CD4-positive, alpha-beta memory T cell (primary cell): ENCODE measurements at regions of chr17 and their contacts with region 1.

Region 1: DNA sequence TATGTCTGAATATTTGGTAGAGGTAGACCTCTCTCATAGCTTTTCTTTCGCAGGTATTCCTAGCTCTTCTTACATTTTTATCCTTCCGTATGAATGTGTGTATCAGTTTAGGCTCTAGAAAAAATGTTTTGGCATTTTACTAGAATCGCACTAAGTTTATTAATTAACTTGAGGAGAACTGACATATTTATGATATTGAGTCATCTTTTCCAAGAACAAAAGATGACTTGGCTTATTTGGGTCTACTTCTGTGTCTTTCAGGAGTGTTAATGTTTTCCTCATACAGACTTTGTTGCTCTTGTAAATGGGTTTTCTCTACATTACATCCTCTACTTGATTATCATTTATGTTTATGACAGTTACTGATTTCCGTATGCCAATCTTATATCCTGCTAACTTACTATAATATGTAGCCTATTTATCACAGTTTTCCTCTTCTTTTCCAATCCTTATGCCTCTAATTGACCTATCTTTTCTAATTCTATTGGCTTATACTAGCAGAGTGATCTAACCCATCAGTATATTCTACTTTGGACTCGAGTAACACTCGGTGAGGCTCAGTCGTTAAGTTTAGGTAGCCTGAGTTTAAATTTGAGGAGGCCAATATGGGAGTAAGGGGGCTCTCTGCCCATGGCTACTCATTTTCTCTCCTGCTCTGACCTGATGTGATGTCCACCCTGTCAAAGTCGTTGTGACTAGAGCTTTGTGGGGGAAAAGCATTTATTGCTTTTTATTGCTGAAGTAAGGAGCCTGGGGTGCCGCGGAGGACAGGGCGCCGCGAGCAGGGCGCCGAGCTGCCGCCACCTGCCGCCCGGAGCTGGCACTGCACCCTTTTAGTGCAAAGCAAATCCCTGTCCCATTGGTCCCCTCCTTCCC is 20.0 kb downstream of the ST6GALNAC1 start:
- DNase-seq: peak; percentile 67 to 73 (median 70)
- H3K4me3 ChIP-seq: no peak overlapping the region
- H3K4me3 Mint-ChIP-seq: no peak overlapping the region
- H3K27ac ChIP-seq: no peak overlapping the region
- H3K27ac Mint-ChIP-seq: peak overlapping the region in 1 of 7 donors; percentile 55
- H3K4me1 ChIP-seq: peaks cover 4% of the 10 kb centered on the region
- H3K4me1 Mint-ChIP-seq: peaks cover 0 to 6% (median under 1%) of the 10 kb centered on the region in 4 donors
- H3K27me3 ChIP-seq: no peaks in the 10 kb centered on the region
- H3K27me3 Mint-ChIP-seq: peaks cover 0 to 1% of the 10 kb centered on the region in 2 donors

Region 2: GRCh38 chr17:76264755-76265596 is 358.5 kb before region 1 on chr17 and contains the start of gene UBALD2:
- CTCF ChIA-PET with region 1: no interaction called
- POLR2A ChIA-PET with region 1: no interaction called
- intact Hi-C with region 1: no loop called
- DNase-seq: peak; percentile 99
- H3K4me3 ChIP-seq: peak within 1 kb of the TSS; percentile 94 to 100
- H3K4me3 Mint-ChIP-seq: peak within 1 kb of the TSS; percentile 89 to 95 (median 92)
- H3K27ac ChIP-seq: peak within 1 kb of the TSS; percentile 82
- H3K27ac Mint-ChIP-seq: peak within 1 kb of the TSS; percentile 93 to 98 (median 96)
- H3K4me1 ChIP-seq: peaks cover 57% of the 10 kb centered on the region
- H3K4me1 Mint-ChIP-seq: peaks cover 33 to 69% (median 52%) of the 10 kb centered on the region in 4 donors
- H3K27me3 ChIP-seq: no peaks in the 10 kb centered on the region
- H3K27me3 Mint-ChIP-seq: no peaks in the 10 kb centered on the region
- total RNA-seq, gene UBALD2: 101 to 103 TPM

Region 3: GRCh38 chr17:76408052-76408849 is 215.3 kb before region 1 on chr17:
- CTCF ChIA-PET with region 1: interaction called, 5 read pairs
- POLR2A ChIA-PET with region 1: no interaction called
- intact Hi-C with region 1: loop called (anchors 1 kb)
- DNase-seq: peak; percentile 60 to 68 (median 66)
- H3K4me3 ChIP-seq: no peak overlapping the region
- H3K4me3 Mint-ChIP-seq: no peak overlapping the region
- H3K27ac ChIP-seq: no peak overlapping the region
- H3K27ac Mint-ChIP-seq: peak overlapping the region; percentile 6 to 74 (median 59)
- H3K4me1 ChIP-seq: no peaks in the 10 kb centered on the region
- H3K4me1 Mint-ChIP-seq: peaks cover 4 to 14% (median 9%) of the 10 kb centered on the region in 4 donors
- H3K27me3 ChIP-seq: no peaks in the 10 kb centered on the region
- H3K27me3 Mint-ChIP-seq: no peaks in the 10 kb centered on the region

Region 4: DNA sequence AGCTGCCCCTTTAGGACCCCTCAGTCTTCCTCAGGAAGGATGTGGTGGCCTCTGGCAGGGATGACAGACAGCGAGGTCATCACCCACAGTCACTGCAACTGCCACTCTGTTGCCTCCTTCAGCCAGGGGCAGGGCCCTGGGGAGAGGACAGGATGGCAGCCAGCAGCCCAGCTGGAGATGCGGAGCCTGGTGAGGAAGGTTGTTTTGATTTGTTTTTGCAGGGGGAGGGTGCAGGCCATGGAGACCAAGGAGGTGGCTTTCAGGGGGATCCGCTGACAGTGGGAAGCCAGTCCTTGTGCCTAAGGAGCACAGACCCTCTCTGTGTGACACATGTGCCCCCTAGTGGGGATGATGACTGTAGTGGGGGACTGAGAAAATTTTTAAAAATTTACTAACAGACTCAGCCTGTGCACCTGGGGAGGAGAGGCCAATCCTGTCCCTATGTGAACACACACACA is 76.3 kb before region 1 on chr17:
- CTCF ChIA-PET with region 1: interaction called, 28 read pairs
- POLR2A ChIA-PET with region 1: interaction called, 3 read pairs
- intact Hi-C with region 1: no loop called
- DNase-seq: peak; percentile 37 to 62 (median 59)
- H3K4me3 ChIP-seq: no peak overlapping the region
- H3K4me3 Mint-ChIP-seq: no peak overlapping the region
- H3K27ac ChIP-seq: no peak overlapping the region
- H3K27ac Mint-ChIP-seq: peak overlapping the region in 1 of 7 donors; percentile 38
- H3K4me1 ChIP-seq: peaks cover 7% of the 10 kb centered on the region
- H3K4me1 Mint-ChIP-seq: peaks cover 0 to 2% (median 0%) of the 10 kb centered on the region in 4 donors
- H3K27me3 ChIP-seq: no peaks in the 10 kb centered on the region
- H3K27me3 Mint-ChIP-seq: peaks cover 6% of the 10 kb centered on the region in 2 donors

Region 5: GRCh38 chr17:76593384-76593826 is 30.1 kb before region 1 on chr17:
- CTCF ChIA-PET with region 1: interaction called, 11 read pairs
- POLR2A ChIA-PET with region 1: no interaction called
- intact Hi-C with region 1: no loop called
- DNase-seq: no peak
- H3K4me3 ChIP-seq: no peak overlapping the region
- H3K4me3 Mint-ChIP-seq: no peak overlapping the region
- H3K27ac ChIP-seq: no peak overlapping the region
- H3K27ac Mint-ChIP-seq: peak overlapping the region in 2 of 7 donors; percentile 6 to 49
- H3K4me1 ChIP-seq: no peaks in the 10 kb centered on the region
- H3K4me1 Mint-ChIP-seq: peaks cover 0 to 3% (median 2%) of the 10 kb centered on the region in 4 donors
- H3K27me3 ChIP-seq: no peaks in the 10 kb centered on the region
- H3K27me3 Mint-ChIP-seq: peaks cover 12 to 27% of the 10 kb centered on the region in 2 donors

Region 6: DNA sequence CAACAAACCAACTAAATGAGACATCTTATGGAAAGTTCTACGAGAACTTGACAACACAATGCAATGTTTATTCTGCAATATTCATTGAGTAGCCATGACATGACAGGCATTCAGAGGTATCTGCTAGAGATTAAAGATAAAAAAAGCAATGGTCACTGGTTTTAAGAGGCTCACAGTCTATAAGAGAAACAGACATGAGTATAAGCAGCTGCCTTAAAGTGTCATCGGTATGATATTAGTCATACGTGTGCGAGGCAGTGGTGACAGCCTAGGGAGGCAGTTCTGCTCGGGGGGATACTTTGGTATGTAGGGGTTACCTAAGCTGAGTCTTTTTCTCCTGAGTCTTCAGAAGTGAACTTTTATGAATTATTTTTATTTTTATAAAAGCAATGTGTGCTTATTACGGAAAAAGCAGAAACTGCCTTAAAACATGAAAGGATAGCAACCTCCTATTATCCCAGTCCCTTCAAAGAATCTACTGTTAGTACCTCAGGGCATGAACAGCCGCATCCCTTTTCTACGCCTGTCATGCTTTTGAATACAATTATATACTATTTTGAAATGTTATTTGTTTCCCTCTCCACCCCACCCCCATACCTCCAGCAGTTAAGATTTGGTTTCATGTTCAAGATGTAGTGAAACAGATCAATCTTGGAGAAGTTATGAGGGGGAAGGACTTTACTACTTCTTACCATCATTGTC is 12.3 kb after region 1 on chr17:
- CTCF ChIA-PET with region 1: interaction called, 40 read pairs
- POLR2A ChIA-PET with region 1: no interaction called
- intact Hi-C with region 1: no loop called
- DNase-seq: no peak
- H3K4me3 ChIP-seq: no peak overlapping the region
- H3K4me3 Mint-ChIP-seq: no peak overlapping the region
- H3K27ac ChIP-seq: no peak overlapping the region
- H3K27ac Mint-ChIP-seq: no peak overlapping the region
- H3K4me1 ChIP-seq: peaks cover 9% of the 10 kb centered on the region
- H3K4me1 Mint-ChIP-seq: peaks cover 2 to 20% (median 7%) of the 10 kb centered on the region in 4 donors
- H3K27me3 ChIP-seq: no peaks in the 10 kb centered on the region
- H3K27me3 Mint-ChIP-seq: peaks cover 0 to 1% of the 10 kb centered on the region in 2 donors

Region 7: GRCh38 chr17:76681222-76682137 is 58.0 kb after region 1 on chr17:
- CTCF ChIA-PET with region 1: interaction called, 78 read pairs
- POLR2A ChIA-PET with region 1: interaction called, 16 read pairs
- intact Hi-C with region 1: loop called (anchors 1 kb)
- DNase-seq: peak; percentile 67 to 75 (median 73)
- H3K4me3 ChIP-seq: no peak overlapping the region
- H3K4me3 Mint-ChIP-seq: peak overlapping the region in 4 of 8 donors; percentile 1 to 37 (median 19)
- H3K27ac ChIP-seq: no peak overlapping the region
- H3K27ac Mint-ChIP-seq: peak overlapping the region in 6 of 7 donors; percentile 30 to 90 (median 74)
- H3K4me1 ChIP-seq: peaks cover 46% of the 10 kb centered on the region
- H3K4me1 Mint-ChIP-seq: peaks cover 8 to 16% (median 14%) of the 10 kb centered on the region in 4 donors
- H3K27me3 ChIP-seq: no peaks in the 10 kb centered on the region
- H3K27me3 Mint-ChIP-seq: peaks cover 0 to 3% of the 10 kb centered on the region in 2 donors

Region 8: DNA sequence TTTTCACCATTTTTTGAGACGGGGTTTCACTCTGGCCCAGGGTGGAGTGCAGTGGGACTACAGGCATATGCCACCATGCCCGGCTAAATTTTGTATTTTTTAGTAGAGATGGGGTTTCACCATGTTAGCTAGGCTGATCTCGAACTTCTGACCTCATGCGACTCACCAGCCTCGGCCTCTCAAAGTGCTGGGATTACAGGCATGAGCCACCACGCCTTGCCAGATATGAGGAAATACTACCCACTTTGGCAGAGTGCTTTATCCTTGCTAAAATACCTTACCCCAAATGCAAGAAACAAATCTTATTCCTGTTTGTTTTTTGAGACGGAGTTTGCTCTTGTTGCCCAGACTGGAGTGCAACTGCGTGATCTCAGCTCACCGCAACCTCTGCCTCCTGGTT is 181.8 kb after region 1 on chr17:
- CTCF ChIA-PET with region 1: no interaction called
- POLR2A ChIA-PET with region 1: no interaction called
- intact Hi-C with region 1: no loop called
- DNase-seq: no peak
- H3K4me3 ChIP-seq: no peak overlapping the region
- H3K4me3 Mint-ChIP-seq: no peak overlapping the region
- H3K27ac ChIP-seq: no peak overlapping the region
- H3K27ac Mint-ChIP-seq: no peak overlapping the region
- H3K4me1 ChIP-seq: no peaks in the 10 kb centered on the region
- H3K4me1 Mint-ChIP-seq: no peaks in the 10 kb centered on the region
- H3K27me3 ChIP-seq: no peaks in the 10 kb centered on the region
- H3K27me3 Mint-ChIP-seq: no peaks in the 10 kb centered on the region